ENCODE measurements at regions of chr17 and their contacts with region 1.

Region 1: DNA sequence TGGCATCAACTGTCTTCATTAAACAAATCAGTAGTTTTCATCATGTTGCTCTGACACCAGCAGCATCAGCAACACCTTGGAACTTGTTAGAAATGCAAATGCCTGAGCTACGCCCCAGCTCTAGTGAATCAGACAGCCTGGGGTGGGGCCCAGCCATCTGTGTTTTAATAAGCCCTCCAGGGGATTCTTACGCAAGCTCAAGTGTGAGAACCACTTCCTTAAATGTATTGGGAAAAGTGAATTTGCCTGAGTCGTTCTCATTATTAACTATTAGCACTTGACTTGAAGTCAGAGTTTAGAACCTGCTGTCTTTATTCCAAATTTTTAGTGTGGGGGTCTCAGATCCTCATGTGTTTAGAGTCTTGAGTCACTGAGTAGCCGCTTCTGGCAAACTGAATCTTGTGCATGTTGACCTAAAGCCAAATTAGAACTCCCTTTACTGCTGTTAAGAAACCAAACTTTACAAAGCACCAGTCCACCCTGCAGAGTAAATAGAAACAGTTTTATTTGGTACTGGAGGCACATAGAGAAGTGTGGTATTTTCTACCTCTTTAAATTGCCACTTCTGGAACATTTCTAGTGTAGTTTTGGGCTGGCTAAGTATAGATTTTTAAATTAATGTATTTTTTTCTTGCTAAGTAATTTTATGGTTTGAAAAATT is 137.4 kb upstream of the COX10 start:
- H3K4me3 Mint-ChIP-seq: no peak overlapping the region
- H3K27ac Mint-ChIP-seq: peak overlapping the region; percentile 91
- H3K4me1 Mint-ChIP-seq: peaks cover 40% of the 10 kb centered on the region
- H3K27me3 Mint-ChIP-seq: no peaks in the 10 kb centered on the region

Region 2: GRCh38 chr17:13638855-13639458 is 293.0 kb before region 1 on chr17:
- intact Hi-C with region 1: loop called (anchors 2 kb)
- H3K4me3 Mint-ChIP-seq: no peak overlapping the region
- H3K27ac Mint-ChIP-seq: no peak overlapping the region
- H3K4me1 Mint-ChIP-seq: no peaks in the 10 kb centered on the region
- H3K27me3 Mint-ChIP-seq: no peaks in the 10 kb centered on the region

Region 3: GRCh38 chr17:14004927-14005620 is 73.1 kb after region 1 on chr17:
- intact Hi-C with region 1: loop called (anchors 5 kb)
- H3K4me3 Mint-ChIP-seq: no peak overlapping the region
- H3K27ac Mint-ChIP-seq: peak overlapping the region; percentile 83
- H3K4me1 Mint-ChIP-seq: peaks cover 29% of the 10 kb centered on the region
- H3K27me3 Mint-ChIP-seq: peaks cover 1% of the 10 kb centered on the region

Region 4: DNA sequence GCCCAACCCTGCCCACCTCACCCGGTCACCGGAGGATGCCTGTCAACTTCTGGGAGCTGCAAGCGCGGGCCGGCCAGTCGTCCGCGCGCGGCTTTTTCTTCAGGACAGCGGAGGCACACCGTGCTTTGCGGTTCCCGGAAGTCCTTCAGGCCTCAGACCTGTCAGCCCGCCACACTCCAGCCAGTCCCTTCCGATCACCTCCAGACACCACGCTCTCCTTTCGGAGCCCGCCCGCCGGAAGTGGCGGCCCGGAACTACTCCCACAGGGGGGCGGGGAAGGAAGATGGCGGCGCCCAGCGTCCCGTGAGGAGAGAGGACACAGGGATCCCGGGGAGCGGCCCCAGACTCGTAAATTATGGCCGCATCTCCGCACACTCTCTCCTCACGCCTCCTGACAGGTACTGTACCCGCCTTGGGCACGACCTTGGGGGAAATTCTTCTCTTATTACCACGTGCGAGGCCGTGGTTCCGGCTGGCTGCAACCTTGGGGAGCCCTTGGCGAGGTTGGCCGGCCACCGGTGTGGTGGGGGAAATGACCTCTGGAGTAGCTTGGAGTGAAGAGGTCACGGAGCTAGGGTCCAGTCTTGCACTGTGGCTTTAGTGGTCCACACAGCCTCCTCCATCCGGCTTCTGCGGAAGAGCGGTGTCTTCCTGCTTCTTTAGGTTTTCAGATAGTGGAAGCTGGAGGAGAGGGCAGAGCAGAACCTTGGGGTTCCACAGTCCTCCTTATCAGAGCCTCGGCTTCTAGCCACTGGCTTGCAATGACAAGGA is 137.5 kb after region 1 on chr17 and contains the start of gene COX10:
- intact Hi-C with region 1: loop called (anchors 5 kb)
- H3K4me3 Mint-ChIP-seq: peak within 1 kb of the TSS; percentile 99
- H3K27ac Mint-ChIP-seq: peak within 1 kb of the TSS; percentile 99
- H3K4me1 Mint-ChIP-seq: peaks cover 36% of the 10 kb centered on the region
- H3K27me3 Mint-ChIP-seq: no peaks in the 10 kb centered on the region

Region 5: DNA sequence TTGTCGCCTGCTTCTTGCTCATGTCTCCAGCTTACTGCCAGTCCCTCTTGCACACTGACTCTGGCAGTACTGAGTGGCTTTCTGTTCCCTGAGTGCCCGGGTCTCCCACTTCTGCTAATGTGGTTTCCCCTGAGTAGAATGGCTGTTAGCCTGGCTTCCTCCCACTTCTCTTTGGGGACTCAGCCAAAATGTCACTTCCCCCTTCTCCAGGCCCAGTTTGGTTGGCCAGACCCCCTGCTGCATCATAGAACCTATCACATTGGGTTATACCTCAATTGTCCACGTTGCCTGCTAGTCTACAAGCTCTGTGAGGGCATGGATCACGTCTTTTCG is 673.3 kb after region 1 on chr17:
- intact Hi-C with region 1: loop called (anchors 10 kb)
- H3K4me3 Mint-ChIP-seq: peak overlapping the region; percentile 66
- H3K27ac Mint-ChIP-seq: peak overlapping the region; percentile 98
- H3K4me1 Mint-ChIP-seq: peaks cover 36% of the 10 kb centered on the region
- H3K27me3 Mint-ChIP-seq: no peaks in the 10 kb centered on the region

Region 6: GRCh38 chr17:15233022-15233805 is 1301.3 kb after region 1 on chr17:
- intact Hi-C with region 1: loop called (anchors 5 kb)
- H3K4me3 Mint-ChIP-seq: no peak overlapping the region
- H3K27ac Mint-ChIP-seq: peak overlapping the region; percentile 10
- H3K4me1 Mint-ChIP-seq: peaks cover 39% of the 10 kb centered on the region
- H3K27me3 Mint-ChIP-seq: peaks cover 5% of the 10 kb centered on the region